Right ventricle myocardium superior (tissue), 1 donor: ENCODE measurements at regions of chr7 and their contacts with region 1.

Region 1: GRCh38 chr7:99990460-99990852 is 14.6 kb upstream of the AZGP1 start:
- DNase-seq: no peak
- ATAC-seq: no peak

Region 2: GRCh38 chr7:99918959-99919813 is 71.3 kb before region 1 on chr7 and contains the start of gene TRIM4:
- intact Hi-C with region 1: loop called (anchors 5 kb)
- DNase-seq: peak; percentile 95
- ATAC-seq: peak; percentile 99
- total RNA-seq, gene TRIM4: 6.9 TPM

Region 3: GRCh38 chr7:100088621-100089457 is 98.4 kb after region 1 on chr7 and contains the start of gene COPS6:
- intact Hi-C with region 1: loop called (anchors 5 kb)
- DNase-seq: peak; percentile 92
- ATAC-seq: peak; percentile 94
- total RNA-seq, gene COPS6: 107 TPM